Gastrocnemius medialis (tissue), 4 donors: ENCODE measurements at regions of chr6 and their contacts with region 1.

Region 1: DNA sequence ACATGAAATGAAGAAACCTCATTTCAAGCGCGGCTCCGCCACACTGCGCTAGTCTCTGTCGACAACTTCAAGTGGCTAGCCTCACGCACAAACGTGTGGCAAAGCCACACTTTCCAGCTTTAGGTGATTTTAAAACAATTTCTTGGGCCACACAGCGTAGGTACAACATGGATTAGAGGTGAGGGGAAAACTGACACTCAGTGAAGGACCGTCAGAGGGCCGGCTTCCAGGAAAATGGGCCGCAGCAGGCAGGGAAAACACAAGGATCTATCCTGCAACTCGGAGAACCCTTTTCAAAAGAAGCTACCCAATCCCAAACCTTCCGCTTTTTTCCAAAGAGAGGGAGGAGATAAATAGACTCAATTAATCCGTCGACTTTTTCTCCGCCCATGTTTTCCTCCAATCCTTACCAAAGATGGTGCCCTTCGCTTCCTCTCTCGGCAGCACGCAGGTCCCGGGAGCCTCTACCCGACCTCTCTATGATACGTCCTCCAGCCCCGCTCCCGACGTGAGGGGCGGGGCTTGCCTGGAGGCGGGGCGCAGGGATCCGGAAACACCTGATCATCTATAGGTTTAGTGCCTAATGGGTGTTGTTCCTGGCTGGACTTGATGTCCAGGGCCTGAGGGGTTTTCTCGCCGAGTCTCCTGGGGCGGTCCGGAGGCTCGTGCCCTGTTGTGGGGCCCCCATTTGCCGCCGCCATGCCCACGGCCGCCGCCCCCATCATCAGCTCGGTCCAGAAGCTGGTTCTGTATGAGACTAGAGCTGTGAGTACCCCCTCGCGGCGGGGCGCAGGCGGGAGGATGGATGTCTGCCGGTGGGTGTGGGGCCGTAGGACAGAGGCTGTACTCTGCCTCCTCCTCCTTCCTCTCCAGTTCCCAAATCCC is at the starts of genes AK9 and FIG4:
- DNase-seq: peak; percentile 88 to 90
- ATAC-seq: peak; percentile 95 to 96
- H3K4me3 ChIP-seq: peak within 1 kb of the TSS; percentile 88 to 99 (median 92)
- H3K27ac ChIP-seq: peak within 1 kb of the TSS; percentile 86 to 95 (median 91)
- H3K4me1 ChIP-seq: peaks cover 12 to 22% of the 10 kb centered on the region in 2 donors
- H3K27me3 ChIP-seq: no peaks in the 10 kb centered on the region
- CTCF ChIP-seq: peak in 1 of 5 experiments; percentile 9
- POLR2A ChIP-seq: peak; percentile 56 to 79
- total RNA-seq, gene AK9: 3.9 to 8.2 (median 7.1) TPM
- total RNA-seq, gene FIG4: 5.3 to 11.8 (median 9.1) TPM

Region 2: DNA sequence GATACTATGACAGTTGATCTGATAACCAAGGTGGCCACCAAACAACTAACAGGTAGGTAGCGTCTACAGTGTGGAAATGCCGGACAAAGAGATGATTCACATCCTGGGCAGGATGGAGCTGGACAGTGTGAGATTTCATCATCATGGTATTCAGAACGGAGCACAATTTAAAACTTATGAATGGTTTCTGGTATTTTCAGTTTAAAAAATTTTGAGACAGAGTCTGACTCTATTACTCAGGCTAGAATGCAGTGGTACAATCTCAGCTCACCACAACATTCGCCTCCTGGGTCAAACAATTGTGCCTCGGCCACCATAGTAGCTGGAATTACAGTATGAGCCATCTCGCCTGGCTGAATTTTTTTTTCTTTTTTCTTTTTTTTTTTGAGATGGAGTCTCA is 551.9 kb before region 1 on chr6:
- in situ Hi-C with region 1: loop called in 1 of 4 experiments (anchors 25 kb)
- intact Hi-C with region 1: no loop called
- DNase-seq: no peak
- ATAC-seq: no peak
- H3K4me3 ChIP-seq: no peak overlapping the region
- H3K27ac ChIP-seq: no peak overlapping the region
- H3K4me1 ChIP-seq: peaks cover 0 to 5% of the 10 kb centered on the region in 2 donors
- H3K27me3 ChIP-seq: no peaks in the 10 kb centered on the region
- CTCF ChIP-seq: no peak
- POLR2A ChIP-seq: no peak

Region 3: GRCh38 chr6:109455502-109456282 is 235.3 kb before region 1 on chr6 and contains the start of gene MICAL1:
- in situ Hi-C with region 1: no loop called
- intact Hi-C with region 1: loop called (anchors 10 kb)
- DNase-seq: peak; percentile 39 to 60
- ATAC-seq: peak; percentile 56 to 62
- H3K4me3 ChIP-seq: peak within 1 kb of the TSS; percentile 67 to 94 (median 80)
- H3K27ac ChIP-seq: peak within 1 kb of the TSS; percentile 61 to 74 (median 72)
- H3K4me1 ChIP-seq: peaks cover 18 to 34% of the 10 kb centered on the region in 2 donors
- H3K27me3 ChIP-seq: no peaks in the 10 kb centered on the region
- CTCF ChIP-seq: peak in 3 of 5 experiments; percentile 14 to 58 (median 55)
- POLR2A ChIP-seq: peak; percentile 14 to 25
- total RNA-seq, gene MICAL1: 6.0 to 11.6 (median 8.0) TPM

Region 4: DNA sequence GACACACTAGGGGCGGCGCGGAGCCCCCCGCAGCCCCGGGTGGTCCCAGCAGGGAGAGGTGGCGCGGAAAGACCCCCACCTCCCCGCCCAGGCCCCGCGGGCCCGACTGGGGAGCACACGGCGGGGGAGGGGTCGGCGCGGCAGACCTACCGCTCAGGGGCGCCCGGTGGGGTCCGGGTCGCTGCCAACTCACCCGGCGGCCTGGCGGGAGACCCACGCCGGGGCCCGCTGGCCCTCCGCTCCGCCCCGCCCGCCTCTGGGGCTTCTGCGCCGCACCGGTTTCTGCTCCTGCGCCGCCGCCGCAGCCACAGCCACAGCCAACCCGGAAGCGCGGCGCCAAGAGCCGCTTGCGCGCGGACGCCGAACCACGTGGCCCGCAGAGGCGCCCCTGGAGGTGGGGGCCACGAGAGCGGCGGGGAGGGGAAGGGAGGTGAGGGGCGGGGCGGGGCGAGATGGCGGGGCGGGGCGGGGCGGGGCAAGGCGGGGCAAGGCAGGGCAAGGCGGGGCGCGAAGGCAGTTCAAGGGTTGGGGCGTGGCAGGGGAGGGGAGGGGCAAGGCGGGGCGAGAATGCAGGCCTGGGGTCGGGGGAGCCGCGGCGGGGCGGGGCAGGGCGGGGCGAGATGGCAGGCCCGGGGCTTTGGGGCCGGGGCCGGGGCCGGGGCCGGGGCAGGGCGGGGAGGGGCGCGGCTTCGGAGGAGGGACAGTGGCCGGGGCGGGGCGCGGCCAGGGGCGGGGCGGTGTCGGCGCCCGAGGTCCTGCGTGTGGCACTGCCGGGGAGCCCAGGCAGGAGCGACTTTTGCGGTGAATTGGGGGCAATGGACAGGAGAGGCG is 207.9 kb before region 1 on chr6 and contains the start of gene ZBTB24:
- in situ Hi-C with region 1: loop called in 2 of 4 experiments (anchors 10 kb)
- intact Hi-C with region 1: loop called (anchors 1 kb)
- DNase-seq: peak; percentile 82 to 88
- ATAC-seq: peak; percentile 83 to 87
- H3K4me3 ChIP-seq: peak within 1 kb of the TSS; percentile 66 to 100 (median 94)
- H3K27ac ChIP-seq: peak within 1 kb of the TSS; percentile 84 to 93 (median 88)
- H3K4me1 ChIP-seq: peaks cover 37 to 46% of the 10 kb centered on the region in 2 donors
- H3K27me3 ChIP-seq: no peaks in the 10 kb centered on the region
- CTCF ChIP-seq: no peak
- POLR2A ChIP-seq: peak; percentile 75 to 89
- total RNA-seq, gene ZBTB24: 3.7 to 10.5 (median 6.1) TPM

Region 5: DNA sequence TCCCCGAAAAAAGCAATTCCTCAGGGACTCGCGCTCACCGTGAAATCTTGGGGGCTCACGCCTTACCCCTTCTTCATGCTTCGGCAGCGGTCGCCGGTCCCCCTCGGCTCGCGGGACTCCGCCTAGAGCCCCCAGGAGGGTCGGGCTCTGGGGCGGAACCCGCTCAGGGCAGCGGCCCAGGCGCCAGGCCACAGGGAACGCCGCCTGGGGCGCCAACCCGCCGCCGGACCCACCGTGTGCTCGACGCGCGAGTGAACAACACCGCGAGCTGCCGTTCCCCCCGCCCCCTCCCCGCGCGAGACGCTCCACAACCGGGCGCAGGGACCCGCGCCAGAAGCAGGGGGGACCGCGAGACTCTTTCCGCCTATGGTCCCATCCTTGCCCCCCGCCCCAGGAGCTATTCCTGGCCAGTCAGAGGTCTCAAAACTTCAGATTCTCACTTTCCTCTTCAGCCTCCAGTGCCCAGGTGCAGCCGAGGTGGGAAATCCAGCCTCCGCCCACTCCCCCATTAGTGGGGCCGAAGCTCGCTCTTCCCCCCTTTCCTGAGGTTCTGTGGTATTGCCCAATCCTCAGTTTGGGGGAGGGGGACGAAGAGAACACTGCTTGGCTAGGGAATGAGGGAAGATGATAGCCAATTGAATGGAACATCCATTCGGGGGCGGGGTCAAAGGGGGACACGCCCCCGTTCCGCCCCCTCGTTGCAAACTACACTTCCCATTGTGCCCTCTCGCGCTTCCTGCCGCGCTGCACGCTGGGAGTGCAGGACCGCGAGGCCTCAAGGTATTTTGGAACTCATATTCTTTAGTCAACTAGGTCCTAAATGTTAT is 488.6 kb after region 1 on chr6 and contains the start of gene WASF1:
- in situ Hi-C with region 1: loop called in 3 of 4 experiments (anchors 25 kb)
- intact Hi-C with region 1: loop called (anchors 10 kb)
- DNase-seq: peak; percentile 87 to 91
- ATAC-seq: peak; percentile 99
- H3K4me3 ChIP-seq: peak within 1 kb of the TSS; percentile 81 to 99 (median 87)
- H3K27ac ChIP-seq: peak within 1 kb of the TSS; percentile 80 to 93 (median 84)
- H3K4me1 ChIP-seq: peaks cover 38 to 45% of the 10 kb centered on the region in 2 donors
- H3K27me3 ChIP-seq: peaks cover 0 to 6% (median 0%) of the 10 kb centered on the region in 3 donors
- CTCF ChIP-seq: peak in 1 of 5 experiments; percentile 16
- POLR2A ChIP-seq: peak in 1 of 2 donors; percentile 27
- total RNA-seq, gene WASF1: 0.41 to 2.7 (median 1.4) TPM

Region 6: GRCh38 chr6:110958329-110959192 is 1267.6 kb after region 1 on chr6 and contains the start of gene GTF3C6:
- in situ Hi-C with region 1: loop called in 1 of 4 experiments (anchors 25 kb)
- intact Hi-C with region 1: no loop called
- DNase-seq: peak; percentile 88 to 89
- ATAC-seq: peak; percentile 97 to 99
- H3K4me3 ChIP-seq: peak within 1 kb of the TSS; percentile 81 to 98 (median 92)
- H3K27ac ChIP-seq: peak within 1 kb of the TSS; percentile 89 to 91 (median 90)
- H3K4me1 ChIP-seq: peaks cover 11 to 12% of the 10 kb centered on the region in 2 donors
- H3K27me3 ChIP-seq: no peaks in the 10 kb centered on the region
- CTCF ChIP-seq: no peak
- POLR2A ChIP-seq: peak; percentile 35 to 41
- total RNA-seq, gene GTF3C6: 76.7 to 105 (median 82.4) TPM